ENCODE measurements at regions of chr12 and their contacts with region 1.

Region 1: GRCh38 chr12:25052196-25052913 is 103.5 kb upstream of the BCAT1 start:
- DNase-seq: peak; percentile 20 to 90 (median 51)
- ATAC-seq: peak; percentile 70
- H3K4me3 ChIP-seq: peak overlapping the region; percentile 67 to 76
- H3K4me3 Mint-ChIP-seq: peak overlapping the region; percentile 97
- H3K27ac ChIP-seq: peak overlapping the region; percentile 79 to 92
- H3K27ac Mint-ChIP-seq: peak overlapping the region; percentile 98
- H3K4me1 ChIP-seq: peaks cover 38% of the 10 kb centered on the region
- H3K4me1 Mint-ChIP-seq: peaks cover 41% of the 10 kb centered on the region
- H3K27me3 ChIP-seq: no peaks in the 10 kb centered on the region
- H3K27me3 Mint-ChIP-seq: no peaks in the 10 kb centered on the region
- CTCF ChIP-seq: no peak

Region 2: GRCh38 chr12:24482882-24483604 is 569.3 kb before region 1 on chr12:
- CTCF ChIA-PET with region 1: no interaction called
- POLR2A ChIA-PET with region 1: no interaction called
- intact Hi-C with region 1: no loop called
- DNase-seq: no peak
- ATAC-seq: no peak
- H3K4me3 ChIP-seq: no peak overlapping the region
- H3K4me3 Mint-ChIP-seq: no peak overlapping the region
- H3K27ac ChIP-seq: no peak overlapping the region
- H3K27ac Mint-ChIP-seq: no peak overlapping the region
- H3K4me1 ChIP-seq: no peaks in the 10 kb centered on the region
- H3K4me1 Mint-ChIP-seq: no peaks in the 10 kb centered on the region
- H3K27me3 ChIP-seq: no peaks in the 10 kb centered on the region
- H3K27me3 Mint-ChIP-seq: no peaks in the 10 kb centered on the region
- CTCF ChIP-seq: no peak

Region 3: GRCh38 chr12:24997970-24998582 is 54.3 kb before region 1 on chr12:
- CTCF ChIA-PET with region 1: no interaction called
- POLR2A ChIA-PET with region 1: interaction called, 3 read pairs
- intact Hi-C with region 1: loop called (anchors 5 kb)
- DNase-seq: peak in 2 of 9 experiments; percentile 11 to 37
- ATAC-seq: peak; percentile 34
- H3K4me3 ChIP-seq: no peak overlapping the region
- H3K4me3 Mint-ChIP-seq: no peak overlapping the region
- H3K27ac ChIP-seq: no peak overlapping the region
- H3K27ac Mint-ChIP-seq: peak overlapping the region; percentile 6
- H3K4me1 ChIP-seq: no peaks in the 10 kb centered on the region
- H3K4me1 Mint-ChIP-seq: peaks cover 10% of the 10 kb centered on the region
- H3K27me3 ChIP-seq: no peaks in the 10 kb centered on the region
- H3K27me3 Mint-ChIP-seq: no peaks in the 10 kb centered on the region
- CTCF ChIP-seq: no peak

Region 4: GRCh38 chr12:25020621-25021243 is 31.6 kb before region 1 on chr12:
- CTCF ChIA-PET with region 1: interaction called, 3 read pairs
- POLR2A ChIA-PET with region 1: interaction called, 6 read pairs
- intact Hi-C with region 1: loop called in 1 of 2 experiments (anchors 5 kb)
- DNase-seq: no peak
- ATAC-seq: no peak
- H3K4me3 ChIP-seq: no peak overlapping the region
- H3K4me3 Mint-ChIP-seq: no peak overlapping the region
- H3K27ac ChIP-seq: no peak overlapping the region
- H3K27ac Mint-ChIP-seq: no peak overlapping the region
- H3K4me1 ChIP-seq: no peaks in the 10 kb centered on the region
- H3K4me1 Mint-ChIP-seq: no peaks in the 10 kb centered on the region
- H3K27me3 ChIP-seq: peaks cover 0 to 3% of the 10 kb centered on the region in 2 experiments
- H3K27me3 Mint-ChIP-seq: no peaks in the 10 kb centered on the region
- CTCF ChIP-seq: no peak

Region 5: GRCh38 chr12:25089738-25090137 is 37.4 kb after region 1 on chr12:
- CTCF ChIA-PET with region 1: no interaction called
- POLR2A ChIA-PET with region 1: interaction called, 7 read pairs
- intact Hi-C with region 1: loop called in 1 of 2 experiments (anchors 5 kb)
- DNase-seq: peak in 2 of 9 experiments; percentile 3 to 16
- ATAC-seq: no peak
- H3K4me3 ChIP-seq: no peak overlapping the region
- H3K4me3 Mint-ChIP-seq: no peak overlapping the region
- H3K27ac ChIP-seq: peak overlapping the region in 1 of 2 experiments; percentile 51
- H3K27ac Mint-ChIP-seq: peak overlapping the region; percentile 64
- H3K4me1 ChIP-seq: peaks cover 4% of the 10 kb centered on the region
- H3K4me1 Mint-ChIP-seq: peaks cover 28% of the 10 kb centered on the region
- H3K27me3 ChIP-seq: no peaks in the 10 kb centered on the region
- H3K27me3 Mint-ChIP-seq: no peaks in the 10 kb centered on the region
- CTCF ChIP-seq: no peak

Region 6: GRCh38 chr12:25250744-25251730 is 198.7 kb after region 1 on chr12 and contains the start of gene KRAS:
- CTCF ChIA-PET with region 1: no interaction called
- POLR2A ChIA-PET with region 1: interaction called, 3 read pairs
- intact Hi-C with region 1: loop called in 1 of 2 experiments (anchors 2 kb)
- DNase-seq: peak; percentile 84 to 98 (median 91)
- ATAC-seq: peak; percentile 90
- H3K4me3 ChIP-seq: peak within 1 kb of the TSS; percentile 70 to 79
- H3K4me3 Mint-ChIP-seq: peak within 1 kb of the TSS; percentile 93
- H3K27ac ChIP-seq: peak within 1 kb of the TSS; percentile 67 to 75
- H3K27ac Mint-ChIP-seq: peak within 1 kb of the TSS; percentile 95
- H3K4me1 ChIP-seq: peaks cover 11% of the 10 kb centered on the region
- H3K4me1 Mint-ChIP-seq: peaks cover 38% of the 10 kb centered on the region
- H3K27me3 ChIP-seq: no peaks in the 10 kb centered on the region
- H3K27me3 Mint-ChIP-seq: no peaks in the 10 kb centered on the region
- CTCF ChIP-seq: no peak
- total RNA-seq, gene KRAS: 47.1 to 49.3 TPM

Region 7: DNA sequence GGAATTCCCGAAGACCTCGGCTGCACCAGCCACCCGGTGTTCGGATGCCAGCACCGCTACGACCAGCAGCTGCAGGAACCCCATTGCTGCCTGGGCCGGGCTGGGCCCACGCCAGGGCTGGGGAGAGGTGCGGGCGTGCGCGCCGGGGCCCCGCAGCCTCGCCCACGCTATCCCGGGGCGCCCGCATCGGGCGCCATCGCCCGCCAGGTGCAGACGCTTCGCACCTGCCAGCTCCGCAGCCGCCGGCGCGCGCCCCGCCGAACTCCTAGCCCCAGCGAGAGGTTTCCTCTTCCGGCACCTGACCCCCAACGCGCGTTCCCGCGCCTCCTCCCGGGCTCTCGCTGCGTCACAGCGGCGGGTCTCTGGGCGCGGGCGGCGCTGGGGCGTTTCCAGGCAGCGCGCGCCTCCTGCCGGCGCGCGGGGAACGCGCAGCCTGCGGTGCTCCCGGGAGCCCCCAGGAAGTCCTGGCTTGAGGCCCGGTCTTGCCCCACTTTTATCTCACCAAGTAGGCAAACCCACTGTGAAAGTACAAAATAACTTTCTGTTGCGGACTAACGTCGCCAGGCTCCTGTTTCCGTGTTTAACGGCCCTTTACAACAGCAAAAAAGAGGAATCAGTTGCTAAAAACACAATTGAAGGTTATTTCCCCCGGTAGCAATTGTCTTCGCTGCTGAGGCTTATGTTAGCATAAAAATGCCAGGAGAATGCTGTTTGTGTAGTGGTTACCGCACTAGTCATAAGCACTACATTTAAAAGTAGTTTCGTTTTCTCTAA is 1961.9 kb after region 1 on chr12 and contains the start of gene TM7SF3:
- CTCF ChIA-PET with region 1: no interaction called
- POLR2A ChIA-PET with region 1: no interaction called
- intact Hi-C with region 1: loop called in 1 of 2 experiments (anchors 10 kb)
- DNase-seq: peak; percentile 92 to 98 (median 96)
- ATAC-seq: peak; percentile 89
- H3K4me3 ChIP-seq: peak within 1 kb of the TSS; percentile 87 to 93
- H3K4me3 Mint-ChIP-seq: peak within 1 kb of the TSS; percentile 93
- H3K27ac ChIP-seq: peak within 1 kb of the TSS; percentile 80 to 98
- H3K27ac Mint-ChIP-seq: peak within 1 kb of the TSS; percentile 92
- H3K4me1 ChIP-seq: peaks cover 25% of the 10 kb centered on the region
- H3K4me1 Mint-ChIP-seq: peaks cover 51% of the 10 kb centered on the region
- H3K27me3 ChIP-seq: no peaks in the 10 kb centered on the region
- H3K27me3 Mint-ChIP-seq: no peaks in the 10 kb centered on the region
- CTCF ChIP-seq: peak; percentile 98
- total RNA-seq, gene TM7SF3: 5.8 to 7.2 TPM